Dendritic cell treated with granulocyte-macrophage colony-stimulating factor and Interleukin-4, amounts not matched to agents 40 ng/mL and 50 ng/mL, for 4 days (primary cell): ENCODE measurements at regions of chr13 and their contacts with region 1.

Region 1: DNA sequence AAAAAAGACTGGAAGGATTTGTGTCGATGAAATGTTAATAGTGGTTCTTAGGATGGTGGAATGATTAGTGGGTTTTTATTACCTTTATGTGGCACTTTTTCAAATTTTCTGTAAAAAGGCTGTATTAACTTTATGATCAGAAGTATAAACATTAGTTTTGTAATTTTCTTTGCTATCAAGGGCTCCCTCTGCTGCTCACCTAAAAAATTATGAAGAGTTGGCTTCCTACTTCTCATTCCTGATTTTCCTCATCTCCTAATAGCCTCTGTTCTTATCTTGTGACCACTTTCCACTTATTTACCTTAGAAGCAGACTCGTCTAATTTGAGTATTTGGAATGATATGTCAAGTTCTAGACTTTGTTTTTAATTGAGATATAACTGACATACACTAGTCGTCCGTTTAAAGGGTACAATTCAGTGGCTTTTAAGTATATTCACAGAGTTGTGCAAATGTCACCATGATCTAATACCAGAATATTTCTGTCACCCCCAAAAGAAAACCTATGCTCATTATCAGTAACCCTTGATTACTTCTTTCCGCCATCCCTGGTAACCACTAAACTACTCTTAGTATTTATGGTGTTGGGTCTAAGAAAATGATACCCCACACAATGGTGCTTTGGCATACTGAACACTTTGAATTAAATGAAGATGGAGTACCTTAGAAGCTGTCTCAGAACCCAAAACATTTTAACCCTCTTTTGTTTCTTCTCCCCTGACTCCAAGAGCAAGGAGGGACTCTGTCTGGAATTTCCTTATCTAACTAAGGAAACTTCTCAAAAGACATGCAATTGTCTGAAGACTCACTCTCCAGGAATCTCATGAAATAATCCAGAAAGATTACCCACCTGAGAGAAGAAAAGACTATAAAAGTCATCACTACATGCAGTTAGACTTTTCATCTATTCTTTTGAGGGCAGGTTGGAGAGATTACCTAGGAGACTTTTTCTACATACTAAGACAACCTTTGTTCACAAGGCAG is 311.3 kb downstream of the DLEU7 start:
- H3K4me3 Mint-ChIP-seq: no peak overlapping the region
- H3K27ac Mint-ChIP-seq: no peak overlapping the region
- H3K4me1 Mint-ChIP-seq: peaks cover 28% of the 10 kb centered on the region
- H3K27me3 Mint-ChIP-seq: no peaks in the 10 kb centered on the region

Region 2: DNA sequence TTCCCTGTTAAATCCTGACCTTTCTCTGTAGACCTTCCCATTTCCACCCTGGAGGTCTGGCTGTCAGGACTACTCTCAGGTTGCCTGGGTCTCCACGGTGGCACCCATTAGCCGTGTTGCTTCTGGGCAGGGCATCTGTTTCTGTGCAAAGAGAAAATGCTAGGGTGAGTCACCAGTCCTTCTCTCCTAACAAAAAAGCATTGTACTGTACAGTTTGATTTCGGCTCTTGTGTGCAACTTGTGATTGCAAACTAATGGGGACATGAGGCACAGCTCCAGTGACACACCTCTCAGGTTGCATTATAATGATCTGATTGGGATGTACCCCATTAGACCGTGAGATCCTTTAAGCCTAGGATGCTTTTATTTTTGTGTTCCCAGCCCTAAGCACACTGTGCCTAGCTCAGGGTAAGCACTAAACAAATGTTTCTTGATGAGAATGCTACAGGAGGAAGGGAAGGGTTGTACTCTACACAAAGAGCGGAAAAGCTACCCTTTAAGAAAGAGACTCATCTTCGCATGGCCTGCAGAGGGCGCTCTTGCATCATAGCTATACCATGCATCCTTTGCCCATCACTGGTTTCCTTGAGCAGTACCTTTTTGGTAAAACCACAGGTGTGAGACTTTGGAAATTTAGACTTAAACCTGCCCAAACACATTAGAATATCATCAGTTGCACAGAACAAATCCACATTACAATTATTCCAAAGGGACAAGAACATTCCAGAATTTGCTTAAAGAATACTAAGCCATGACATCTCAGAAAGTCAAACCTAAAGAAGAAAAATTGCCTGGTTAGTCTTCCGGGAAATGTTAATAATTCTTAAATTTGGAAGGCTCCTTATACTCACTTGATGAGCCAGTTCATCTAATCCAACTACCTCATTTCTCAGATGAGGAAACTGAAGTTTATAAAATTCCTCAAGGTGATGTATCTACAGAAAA is 555.6 kb before region 1 on chr13:
- intact Hi-C with region 1: loop called (anchors 2 kb)
- H3K4me3 Mint-ChIP-seq: no peak overlapping the region
- H3K27ac Mint-ChIP-seq: no peak overlapping the region
- H3K4me1 Mint-ChIP-seq: peaks cover 9% of the 10 kb centered on the region
- H3K27me3 Mint-ChIP-seq: no peaks in the 10 kb centered on the region

Region 3: DNA sequence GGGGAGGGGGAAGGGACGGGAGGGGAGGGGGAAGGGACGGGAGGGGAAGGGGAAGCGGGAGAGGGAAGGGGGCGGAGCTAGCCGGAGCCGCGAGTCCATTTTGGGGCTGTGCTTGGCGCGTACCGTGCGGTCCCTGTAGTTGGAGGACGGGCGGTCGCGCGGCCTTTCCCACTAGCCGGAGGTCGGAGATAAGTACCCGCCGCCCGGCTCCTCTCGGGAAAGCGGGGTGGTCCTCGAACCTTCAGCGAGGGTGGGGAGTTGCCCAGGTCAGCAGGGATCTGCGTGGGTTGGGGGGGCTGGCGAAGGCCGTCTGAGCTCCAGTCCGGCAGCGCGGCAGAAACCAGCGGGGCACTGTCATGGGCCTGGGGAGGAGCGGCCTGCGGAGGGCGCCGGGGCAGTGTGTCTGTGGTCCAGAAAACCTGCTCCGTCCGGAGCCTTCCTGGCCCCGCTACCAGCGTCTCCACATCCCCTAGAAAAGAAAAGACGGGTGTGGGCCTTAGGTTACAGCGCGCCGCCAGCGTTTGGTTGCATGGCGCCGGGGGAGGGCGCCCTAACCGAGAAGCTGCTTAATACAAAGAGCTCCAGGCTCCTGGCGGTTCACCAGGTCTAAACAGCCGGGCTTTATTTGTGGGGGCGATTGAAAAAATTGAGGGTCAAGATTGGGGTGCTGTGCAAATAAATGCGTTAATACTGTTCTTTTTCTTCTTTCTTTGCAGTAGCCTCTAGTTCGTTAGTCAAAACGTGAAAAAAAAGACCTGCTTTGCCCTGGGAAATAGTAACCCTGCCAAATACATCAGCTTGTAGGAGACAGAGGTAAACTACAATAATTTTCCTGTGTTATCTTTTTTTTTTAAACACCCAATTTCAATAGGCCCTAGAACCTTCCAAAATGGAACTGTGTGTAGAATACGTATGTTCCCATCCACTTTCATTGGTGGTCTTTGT is 535.0 kb before region 1 on chr13 and contains the start of gene TRIM13:
- intact Hi-C with region 1: loop called (anchors 5 kb)
- H3K4me3 Mint-ChIP-seq: peak within 1 kb of the TSS; percentile 83
- H3K27ac Mint-ChIP-seq: peak within 1 kb of the TSS; percentile 97
- H3K4me1 Mint-ChIP-seq: peaks cover 36% of the 10 kb centered on the region
- H3K27me3 Mint-ChIP-seq: no peaks in the 10 kb centered on the region

Region 4: GRCh38 chr13:50081679-50082425 is 450.4 kb before region 1 on chr13:
- intact Hi-C with region 1: loop called (anchors 5 kb)
- H3K4me3 Mint-ChIP-seq: peak overlapping the region; percentile 98
- H3K27ac Mint-ChIP-seq: peak overlapping the region; percentile 91
- H3K4me1 Mint-ChIP-seq: peaks cover 52% of the 10 kb centered on the region
- H3K27me3 Mint-ChIP-seq: no peaks in the 10 kb centered on the region

Region 5: DNA sequence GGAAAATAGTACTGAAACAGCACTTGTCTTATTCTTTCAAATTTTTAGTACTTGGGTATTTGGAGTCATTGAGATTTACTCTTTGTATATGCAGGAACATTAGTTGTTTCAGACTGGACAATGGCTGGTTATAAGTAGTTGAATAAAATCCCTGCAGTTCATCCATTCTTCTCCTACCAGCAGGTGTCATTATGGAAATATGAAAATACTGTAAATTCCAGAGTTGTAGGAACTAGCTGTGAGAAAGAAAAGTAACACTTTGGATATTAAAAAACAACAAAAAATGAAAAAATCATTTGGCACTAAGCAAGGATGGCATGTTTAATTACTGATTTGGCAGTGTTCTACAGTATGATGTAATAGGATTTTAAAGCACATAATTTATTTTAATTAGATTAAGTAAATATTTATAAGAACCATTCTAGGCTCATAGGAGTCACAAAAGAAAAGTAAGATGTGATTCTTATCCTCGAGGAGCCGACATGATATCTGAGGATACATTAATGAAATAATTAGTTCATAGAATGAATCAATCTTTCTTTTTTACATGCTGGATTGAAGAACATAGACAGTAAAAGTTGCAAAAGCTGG is 361.7 kb before region 1 on chr13:
- intact Hi-C with region 1: loop called (anchors 2 kb)
- H3K4me3 Mint-ChIP-seq: no peak overlapping the region
- H3K27ac Mint-ChIP-seq: no peak overlapping the region
- H3K4me1 Mint-ChIP-seq: peaks cover 5% of the 10 kb centered on the region
- H3K27me3 Mint-ChIP-seq: no peaks in the 10 kb centered on the region

Region 6: GRCh38 chr13:50685491-50685890 is 153.3 kb after region 1 on chr13:
- intact Hi-C with region 1: no loop called
- H3K4me3 Mint-ChIP-seq: no peak overlapping the region
- H3K27ac Mint-ChIP-seq: no peak overlapping the region
- H3K4me1 Mint-ChIP-seq: peaks cover 15% of the 10 kb centered on the region
- H3K27me3 Mint-ChIP-seq: no peaks in the 10 kb centered on the region

Region 7: GRCh38 chr13:50801087-50801931 is 269.1 kb after region 1 on chr13:
- intact Hi-C with region 1: loop called (anchors 5 kb)
- H3K4me3 Mint-ChIP-seq: no peak overlapping the region
- H3K27ac Mint-ChIP-seq: no peak overlapping the region
- H3K4me1 Mint-ChIP-seq: peaks cover 27% of the 10 kb centered on the region
- H3K27me3 Mint-ChIP-seq: no peaks in the 10 kb centered on the region

Region 8: DNA sequence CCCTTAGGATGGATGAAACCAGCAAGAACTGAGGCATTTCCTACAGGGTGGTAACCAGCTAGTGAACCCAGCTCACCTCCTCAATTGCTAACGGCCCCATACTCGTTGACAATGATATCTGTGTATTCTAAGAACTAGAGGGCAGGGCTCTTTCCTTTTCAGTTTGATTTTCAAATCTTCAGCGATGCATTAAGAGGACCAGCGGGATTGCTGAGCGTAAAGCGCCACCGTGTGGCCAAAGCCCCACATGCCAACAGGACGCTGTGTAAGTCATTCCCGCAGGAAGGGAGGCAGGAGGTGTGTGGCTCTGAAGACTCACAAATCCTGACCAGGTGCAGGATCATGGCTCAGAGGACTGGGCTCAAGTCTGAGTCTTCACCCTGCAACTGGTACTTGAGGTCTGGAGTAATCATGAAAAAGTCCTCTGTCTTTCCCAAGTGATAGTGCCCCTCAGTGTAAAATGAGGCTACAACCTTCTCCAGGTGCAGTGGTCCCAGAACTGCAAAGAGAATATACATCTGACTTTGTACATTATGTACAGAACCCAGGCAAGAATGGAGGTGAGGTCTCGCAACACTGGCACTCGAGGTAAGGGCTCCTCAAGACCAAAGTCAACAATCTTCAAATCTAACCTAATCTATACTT is 537.9 kb after region 1 on chr13:
- intact Hi-C with region 1: loop called (anchors 10 kb)
- H3K4me3 Mint-ChIP-seq: no peak overlapping the region
- H3K27ac Mint-ChIP-seq: no peak overlapping the region
- H3K4me1 Mint-ChIP-seq: peaks cover 11% of the 10 kb centered on the region
- H3K27me3 Mint-ChIP-seq: peaks cover 24% of the 10 kb centered on the region